Activated naive CD4-positive, alpha-beta T cell treated with anti-CD3 and anti-CD28 coated beads for 36 hours (primary cell): ENCODE measurements at regions of chr17 and their contacts with region 1.

Region 1: DNA sequence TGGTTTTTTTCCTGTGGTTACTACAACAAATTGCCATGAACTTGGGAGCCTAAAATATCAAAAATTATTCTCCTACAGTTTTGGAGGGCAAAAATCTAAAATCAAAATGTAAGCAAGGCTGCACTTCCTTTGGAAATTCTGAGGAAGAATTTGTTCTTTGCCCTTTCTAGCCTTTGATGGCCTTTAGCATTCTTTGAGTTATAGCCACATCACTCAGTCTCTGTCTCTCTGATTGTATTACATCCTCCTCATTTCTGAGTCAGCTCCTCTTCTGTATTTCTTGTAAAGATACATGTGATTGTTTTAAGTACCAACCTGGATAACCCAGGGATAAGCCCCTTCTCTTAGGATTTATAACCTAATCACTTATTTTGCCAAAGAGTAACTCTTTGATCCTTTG is 282.0 kb downstream of the BCAS3 start:
- DNase-seq: no peak
- H3K4me3 Mint-ChIP-seq: no peak overlapping the region
- H3K27ac Mint-ChIP-seq: no peak overlapping the region
- H3K4me1 Mint-ChIP-seq: no peaks in the 10 kb centered on the region
- H3K27me3 Mint-ChIP-seq: no peaks in the 10 kb centered on the region

Region 2: GRCh38 chr17:61543786-61544415 is 584.2 kb after region 1 on chr17:
- CTCF ChIA-PET with region 1: no interaction called
- intact Hi-C with region 1: loop called (anchors 10 kb)
- DNase-seq: no peak
- H3K4me3 Mint-ChIP-seq: no peak overlapping the region
- H3K27ac Mint-ChIP-seq: no peak overlapping the region
- H3K4me1 Mint-ChIP-seq: no peaks in the 10 kb centered on the region
- H3K27me3 Mint-ChIP-seq: no peaks in the 10 kb centered on the region